Panc1 (cell line): ENCODE measurements at regions of chr17 and their contacts with region 1.

Region 1: GRCh38 chr17:66555605-66556004 is 253.2 kb downstream of the PRKCA start:
- DNase-seq: no peak
- ATAC-seq: no peak
- H3K4me3 ChIP-seq: no peak overlapping the region
- H3K27ac ChIP-seq: no peak overlapping the region
- H3K4me1 ChIP-seq: peaks cover 24% of the 10 kb centered on the region
- H3K27me3 ChIP-seq: no peaks in the 10 kb centered on the region
- CTCF ChIP-seq: no peak

Region 2: DNA sequence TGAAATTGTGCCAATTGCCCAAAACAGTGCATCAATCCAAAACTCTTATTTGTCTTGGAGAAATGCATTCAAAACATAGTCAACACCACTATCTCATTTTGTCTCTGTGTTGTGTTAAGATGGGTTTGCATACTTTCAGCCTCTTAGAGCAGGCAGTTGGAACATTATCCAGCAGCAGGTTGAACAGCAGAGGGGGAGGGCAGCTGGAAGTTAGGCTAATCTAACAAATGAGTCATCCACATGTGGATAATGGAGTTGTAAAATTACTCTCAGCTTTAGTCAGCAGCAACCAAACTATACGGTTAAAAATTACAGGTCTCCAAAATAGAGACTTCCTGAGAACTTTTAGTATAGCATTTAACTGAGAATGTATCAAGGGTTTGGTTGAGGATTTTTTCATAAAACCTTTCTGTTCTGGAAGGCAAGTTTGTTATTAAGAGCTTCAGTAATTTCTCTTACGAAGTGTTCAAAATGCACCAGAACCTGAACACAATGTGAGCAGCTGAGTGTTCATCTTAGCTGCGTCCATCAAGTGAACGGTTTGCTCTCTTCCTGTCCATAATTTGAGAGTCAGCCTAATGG is 206.9 kb before region 1 on chr17:
- CTCF ChIA-PET with region 1: no interaction called
- POLR2A ChIA-PET with region 1: interaction called, 11 read pairs
- in situ Hi-C with region 1: no loop called
- intact Hi-C with region 1: no loop called
- DNase-seq: peak; percentile 67
- ATAC-seq: peak; percentile 78
- H3K4me3 ChIP-seq: peak overlapping the region in 1 of 2 experiments; percentile 4; a peak in 1 of 4 replicates
- H3K27ac ChIP-seq: peak overlapping the region; percentile 83
- H3K4me1 ChIP-seq: peaks cover 87% of the 10 kb centered on the region
- H3K27me3 ChIP-seq: no peaks in the 10 kb centered on the region
- CTCF ChIP-seq: no peak

Region 3: GRCh38 chr17:66633317-66633965 is 77.8 kb after region 1 on chr17:
- CTCF ChIA-PET with region 1: no interaction called
- POLR2A ChIA-PET with region 1: no interaction called
- in situ Hi-C with region 1: no loop called
- intact Hi-C with region 1: no loop called
- DNase-seq: no peak
- ATAC-seq: no peak
- H3K4me3 ChIP-seq: no peak overlapping the region
- H3K27ac ChIP-seq: no peak overlapping the region
- H3K4me1 ChIP-seq: no peaks in the 10 kb centered on the region
- H3K27me3 ChIP-seq: no peaks in the 10 kb centered on the region
- CTCF ChIP-seq: no peak